Mammary epithelial cell (primary cell): ENCODE measurements at regions of chr12 and their contacts with region 1.

Region 1: GRCh38 chr12:108691175-108691997 is 39.9 kb downstream of the CORO1C start:
- DNase-seq: peak; percentile 100
- H3K4me3 ChIP-seq: peak overlapping the region; percentile 1 to 35 (median 6)
- H3K27ac ChIP-seq: peak overlapping the region; percentile 99
- H3K4me1 ChIP-seq: peaks cover 62% of the 10 kb centered on the region
- H3K27me3 ChIP-seq: no peaks in the 10 kb centered on the region
- CTCF ChIP-seq: peak; percentile 41 to 44

Region 2: DNA sequence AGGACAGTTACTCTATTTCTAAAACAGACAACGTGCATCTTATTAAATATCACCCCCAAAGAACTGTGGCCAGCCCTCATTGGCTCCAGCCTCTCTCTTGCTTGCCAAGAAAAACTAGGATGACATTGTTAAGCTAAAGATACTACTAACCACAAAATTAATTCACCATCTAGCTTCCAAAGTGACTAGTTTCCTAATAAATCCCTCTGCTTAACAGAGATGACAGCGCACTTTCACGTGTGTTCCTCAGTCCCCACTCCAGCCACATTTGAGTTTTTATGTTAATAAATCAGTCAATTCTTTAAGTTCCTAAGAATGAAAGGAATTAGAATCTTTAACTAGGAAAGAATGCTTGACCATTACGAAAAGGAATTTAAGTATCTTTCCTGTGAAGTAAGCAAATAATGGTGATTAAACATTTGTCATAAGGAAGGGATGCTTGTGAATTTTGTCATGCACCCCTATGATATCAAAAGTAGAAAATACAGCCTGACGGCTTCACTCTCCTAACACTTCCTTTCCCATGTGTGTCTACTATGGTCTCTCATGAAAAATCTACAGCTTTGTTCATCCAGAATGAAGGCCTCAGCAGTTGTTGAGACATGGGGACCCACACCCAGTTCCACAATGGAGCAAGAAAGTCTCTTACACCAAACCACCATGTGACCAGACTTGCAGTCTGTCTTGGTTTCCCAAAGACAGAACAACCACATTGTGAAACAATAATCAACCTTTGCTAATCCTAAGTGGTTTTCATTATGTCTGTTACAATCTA is 31.8 kb after region 1 on chr12:
- CTCF ChIA-PET with region 1: no interaction called
- dilution Hi-C with region 1: no loop called
- in situ Hi-C with region 1: no loop called
- intact Hi-C with region 1: loop called (anchors 1 kb)
- DNase-seq: peak; percentile 75
- H3K4me3 ChIP-seq: no peak overlapping the region
- H3K27ac ChIP-seq: peak overlapping the region; percentile 85
- H3K4me1 ChIP-seq: peaks cover 60% of the 10 kb centered on the region
- H3K27me3 ChIP-seq: no peaks in the 10 kb centered on the region
- CTCF ChIP-seq: no peak

Region 3: GRCh38 chr12:108773798-108774788 is 82.7 kb after region 1 on chr12:
- CTCF ChIA-PET with region 1: no interaction called
- dilution Hi-C with region 1: no loop called
- in situ Hi-C with region 1: no loop called
- intact Hi-C with region 1: loop called (anchors 2 kb)
- DNase-seq: peak; percentile 91
- H3K4me3 ChIP-seq: no peak overlapping the region
- H3K27ac ChIP-seq: peak overlapping the region; percentile 59
- H3K4me1 ChIP-seq: peaks cover 20% of the 10 kb centered on the region
- H3K27me3 ChIP-seq: no peaks in the 10 kb centered on the region
- CTCF ChIP-seq: no peak